GM23248 (cell line): ENCODE measurements at regions of chr11 and their contacts with region 1.

Region 1: GRCh38 chr11:65888163-65888814 is at the start of gene FIBP:
- DNase-seq: peak; percentile 98
- H3K4me3 ChIP-seq: peak within 1 kb of the TSS; percentile 95
- H3K27ac ChIP-seq: peak within 1 kb of the TSS; percentile 99
- H3K4me1 ChIP-seq: peaks cover 37% of the 10 kb centered on the region
- H3K27me3 ChIP-seq: no peaks in the 10 kb centered on the region
- total RNA-seq, gene FIBP: 201 and 220 TPM in 2 replicates

Region 2: DNA sequence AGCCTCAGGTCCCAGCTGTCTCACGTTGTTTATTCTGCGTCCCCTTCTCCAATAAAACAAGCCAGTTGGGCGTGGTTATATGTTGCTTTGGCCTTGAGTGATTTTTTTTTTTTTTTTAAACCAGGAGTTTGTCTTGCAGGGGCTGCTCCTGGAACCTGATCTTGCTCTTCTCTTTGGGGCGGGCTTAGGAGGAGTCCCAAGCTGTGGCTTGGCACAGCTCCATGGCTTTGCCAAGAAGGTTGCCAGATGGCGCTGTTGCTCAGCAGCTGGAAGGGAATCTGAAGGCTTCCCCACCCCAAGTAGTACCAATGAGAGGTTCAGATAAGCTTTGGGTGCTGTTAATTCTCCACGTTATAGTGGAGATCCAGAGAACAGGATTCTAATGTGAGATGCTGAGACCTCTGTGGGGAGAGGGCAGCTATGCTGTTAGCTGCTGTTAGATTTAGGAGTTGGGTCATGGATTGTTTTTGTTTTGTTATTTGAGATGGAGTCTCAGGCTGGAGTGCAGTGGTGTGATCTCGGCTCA is 1683.8 kb before region 1 on chr11:
- in situ Hi-C with region 1: no loop called
- DNase-seq: peak; percentile 98
- H3K4me3 ChIP-seq: no peak overlapping the region
- H3K27ac ChIP-seq: no peak overlapping the region
- H3K4me1 ChIP-seq: peaks cover 13% of the 10 kb centered on the region
- H3K27me3 ChIP-seq: no peaks in the 10 kb centered on the region

Region 3: GRCh38 chr11:65988791-65989592 is 100.7 kb after region 1 on chr11:
- in situ Hi-C with region 1: loop called (anchors 10 kb)
- DNase-seq: peak; percentile 95
- H3K4me3 ChIP-seq: no peak overlapping the region
- H3K27ac ChIP-seq: peak overlapping the region; percentile 43
- H3K4me1 ChIP-seq: no peaks in the 10 kb centered on the region
- H3K27me3 ChIP-seq: no peaks in the 10 kb centered on the region